Panc1 (cell line): ENCODE measurements at regions of chr17 and their contacts with region 1.

Region 1: DNA sequence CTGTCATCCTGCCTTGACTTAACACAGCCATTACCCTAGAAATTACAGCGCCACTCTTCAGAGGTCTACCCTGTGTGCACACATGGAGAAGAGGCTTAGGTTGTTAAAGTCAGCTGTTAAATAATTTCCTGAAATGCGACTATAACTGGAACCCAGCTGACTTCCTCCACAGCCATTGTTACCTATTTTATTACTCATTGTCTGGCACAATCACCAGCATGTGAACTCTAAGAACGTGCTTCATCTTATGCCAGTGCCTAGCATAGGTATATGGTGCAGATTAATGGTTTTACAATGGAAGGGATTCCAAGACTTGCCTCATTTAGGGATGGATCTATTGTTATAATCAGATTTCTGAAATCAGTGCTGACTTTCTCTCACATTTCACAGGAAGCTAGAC is 11.9 kb downstream of the RDM1 start:
- DNase-seq: no peak
- ATAC-seq: no peak
- H3K4me3 ChIP-seq: no peak overlapping the region
- H3K27ac ChIP-seq: no peak overlapping the region
- H3K4me1 ChIP-seq: no peaks in the 10 kb centered on the region
- H3K27me3 ChIP-seq: no peaks in the 10 kb centered on the region
- CTCF ChIP-seq: no peak

Region 2: DNA sequence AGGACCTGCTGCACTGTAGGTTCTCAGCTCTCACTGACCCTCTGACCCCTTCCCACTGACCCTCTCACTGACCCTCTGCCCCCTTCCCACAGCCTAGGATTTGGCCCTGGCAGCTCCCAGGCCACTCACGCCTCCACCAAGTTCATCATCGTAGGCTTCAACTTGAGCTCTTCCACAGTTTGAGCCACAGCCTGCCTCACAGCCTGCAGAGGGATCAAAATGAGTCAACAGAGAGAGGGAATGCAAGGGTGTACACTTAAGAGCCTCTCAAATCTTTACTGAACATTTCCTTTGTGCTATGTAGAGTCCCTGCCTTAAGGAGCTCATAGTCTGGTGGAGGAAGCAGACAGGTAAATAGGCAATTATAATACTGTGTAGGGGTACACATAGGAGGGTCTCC is 62.1 kb before region 1 on chr17:
- CTCF ChIA-PET with region 1: no interaction called
- POLR2A ChIA-PET with region 1: no interaction called
- in situ Hi-C with region 1: no loop called
- intact Hi-C with region 1: no loop called
- DNase-seq: no peak
- ATAC-seq: no peak
- H3K4me3 ChIP-seq: no peak overlapping the region
- H3K27ac ChIP-seq: no peak overlapping the region
- H3K4me1 ChIP-seq: no peaks in the 10 kb centered on the region
- H3K27me3 ChIP-seq: no peaks in the 10 kb centered on the region
- CTCF ChIP-seq: no peak

Region 3: GRCh38 chr17:35930211-35931065 is 11.8 kb after region 1 on chr17 and contains the start of gene RDM1:
- CTCF ChIA-PET with region 1: interaction called, 10 read pairs
- POLR2A ChIA-PET with region 1: no interaction called
- in situ Hi-C with region 1: no loop called
- intact Hi-C with region 1: no loop called
- DNase-seq: peak; percentile 32
- ATAC-seq: peak; percentile 100
- H3K4me3 ChIP-seq: peak within 1 kb of the TSS; percentile 71 to 73
- H3K27ac ChIP-seq: peak within 1 kb of the TSS; percentile 88
- H3K4me1 ChIP-seq: peaks cover 16% of the 10 kb centered on the region
- H3K27me3 ChIP-seq: no peaks in the 10 kb centered on the region
- CTCF ChIP-seq: no peak
- total RNA-seq, gene RDM1: 5.5 TPM